ENCODE measurements at regions of chr14 and their contacts with region 1.

Region 1: DNA sequence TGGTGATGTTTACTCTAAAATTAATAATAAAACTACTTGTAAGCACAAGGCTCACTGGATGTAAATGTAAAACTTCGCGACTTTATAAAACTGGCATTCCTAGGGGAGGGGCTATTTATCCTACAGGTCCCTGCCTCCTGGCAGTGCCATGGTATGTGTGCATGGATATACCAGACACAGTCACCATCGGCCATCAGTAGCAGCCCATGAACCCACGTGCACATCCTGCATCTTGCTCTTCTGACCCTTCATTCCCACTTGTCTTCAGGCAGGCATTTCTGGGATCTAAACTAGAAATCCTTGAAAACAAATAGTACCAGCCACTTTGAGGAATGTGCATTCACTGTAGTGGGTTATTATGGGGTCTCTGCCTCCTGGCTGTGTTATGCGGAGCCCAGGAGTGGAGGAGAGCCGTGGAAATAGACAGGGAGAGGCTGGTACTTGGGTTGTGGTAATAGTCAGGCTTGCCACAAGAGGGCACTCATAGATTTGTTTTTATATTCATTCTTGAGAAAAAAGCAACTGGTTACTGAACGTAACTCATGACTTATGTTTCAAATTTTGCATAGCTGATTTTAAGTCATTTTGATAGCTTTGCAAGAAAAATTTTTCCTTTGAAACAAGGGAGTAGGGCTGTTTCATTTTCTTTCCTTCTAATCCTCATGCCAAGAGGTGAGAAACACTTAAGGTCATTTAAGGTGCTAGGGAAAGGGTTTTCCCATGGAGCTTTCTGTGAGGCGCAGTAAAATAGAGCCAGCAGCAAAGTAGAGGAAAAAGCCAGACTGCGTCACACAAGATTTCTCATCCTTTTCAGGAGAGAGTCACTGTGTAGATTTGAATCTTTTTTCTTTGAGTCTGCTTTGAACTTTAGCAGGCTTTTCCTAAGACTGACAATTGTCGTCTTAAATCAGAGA is 17.4 kb upstream of the GALNT16 start:
- DNase-seq: peak in 13 of 14 experiments; percentile 7 to 74 (median 37)
- ATAC-seq: peak; percentile 77
- H3K4me3 ChIP-seq: no peak overlapping the region
- H3K4me3 Mint-ChIP-seq: no peak overlapping the region
- H3K27ac ChIP-seq: no peak overlapping the region
- H3K27ac Mint-ChIP-seq: no peak overlapping the region
- H3K4me1 ChIP-seq: no peaks in the 10 kb centered on the region
- H3K4me1 Mint-ChIP-seq: peaks cover 6% of the 10 kb centered on the region
- H3K27me3 ChIP-seq: no peaks in the 10 kb centered on the region
- H3K27me3 Mint-ChIP-seq: no peaks in the 10 kb centered on the region
- CTCF ChIP-seq: peak; percentile 91

Region 2: DNA sequence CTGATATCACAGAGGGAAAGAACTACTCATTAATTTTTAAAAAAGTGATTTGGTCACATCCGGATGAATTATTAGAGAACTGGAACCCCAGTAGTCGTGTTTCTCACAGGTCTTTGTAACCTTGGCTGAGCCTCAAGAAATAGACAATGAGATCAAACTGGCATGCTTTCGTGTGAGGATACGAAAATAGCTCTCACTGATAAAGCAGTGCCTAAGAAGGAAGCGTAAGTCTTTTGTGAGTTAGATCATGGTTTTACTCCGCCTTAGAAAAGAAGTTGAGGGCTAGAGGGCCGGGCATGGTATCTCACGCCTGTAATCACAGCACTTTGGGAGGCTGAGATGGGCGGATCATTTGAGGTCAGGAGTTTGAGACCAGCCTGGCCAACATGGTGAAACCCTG is 16.4 kb before region 1 on chr14:
- CTCF ChIA-PET with region 1: no interaction called
- POLR2A ChIA-PET with region 1: no interaction called
- intact Hi-C with region 1: no loop called
- DNase-seq: no peak
- ATAC-seq: no peak
- H3K4me3 ChIP-seq: no peak overlapping the region
- H3K4me3 Mint-ChIP-seq: no peak overlapping the region
- H3K27ac ChIP-seq: no peak overlapping the region
- H3K27ac Mint-ChIP-seq: no peak overlapping the region
- H3K4me1 ChIP-seq: no peaks in the 10 kb centered on the region
- H3K4me1 Mint-ChIP-seq: no peaks in the 10 kb centered on the region
- H3K27me3 ChIP-seq: no peaks in the 10 kb centered on the region
- H3K27me3 Mint-ChIP-seq: no peaks in the 10 kb centered on the region
- CTCF ChIP-seq: no peak

Region 3: GRCh38 chr14:69460093-69460701 is 217.6 kb after region 1 on chr14:
- CTCF ChIA-PET with region 1: interaction called, 6 read pairs
- POLR2A ChIA-PET with region 1: no interaction called
- intact Hi-C with region 1: loop called in 1 of 2 experiments (anchors 1 kb)
- DNase-seq: peak in 13 of 14 experiments; percentile 4 to 77 (median 29)
- ATAC-seq: peak; percentile 81
- H3K4me3 ChIP-seq: no peak overlapping the region
- H3K4me3 Mint-ChIP-seq: no peak overlapping the region
- H3K27ac ChIP-seq: no peak overlapping the region
- H3K27ac Mint-ChIP-seq: no peak overlapping the region
- H3K4me1 ChIP-seq: no peaks in the 10 kb centered on the region
- H3K4me1 Mint-ChIP-seq: no peaks in the 10 kb centered on the region
- H3K27me3 ChIP-seq: no peaks in the 10 kb centered on the region
- H3K27me3 Mint-ChIP-seq: no peaks in the 10 kb centered on the region
- CTCF ChIP-seq: peak; percentile 80

Region 4: DNA sequence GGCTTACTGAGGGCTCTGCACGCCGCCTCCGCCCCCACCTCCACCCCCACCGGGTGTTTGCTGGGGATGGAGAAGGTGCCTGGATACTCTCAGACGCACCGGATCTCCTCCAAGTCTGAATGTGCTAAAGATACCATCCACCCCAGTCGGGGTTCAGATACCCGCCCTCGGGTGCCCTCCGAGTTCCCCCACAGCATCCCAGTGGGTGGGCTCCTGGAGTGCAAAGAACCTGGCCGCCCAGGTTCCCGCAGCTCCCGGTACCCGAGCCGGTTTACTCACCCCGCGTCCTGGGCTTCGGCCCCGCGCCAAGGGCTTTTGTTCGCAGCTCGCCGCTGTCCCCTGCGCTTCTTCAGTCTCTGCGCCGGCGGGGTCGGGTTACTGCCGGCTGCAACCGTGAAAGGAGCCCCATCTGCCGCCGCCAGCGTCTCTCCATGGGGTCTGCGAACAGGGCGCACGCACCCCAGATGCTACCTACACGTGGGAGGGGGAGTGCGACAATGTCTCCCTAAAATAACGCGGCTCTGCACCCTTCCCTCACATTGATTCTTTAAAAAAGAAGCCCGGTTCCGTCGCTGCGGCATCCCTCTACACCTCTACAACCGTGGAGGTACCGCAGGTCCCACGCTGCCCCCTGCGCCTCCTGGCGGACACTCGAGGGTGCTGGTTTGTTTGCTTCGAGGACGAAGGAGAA is 331.8 kb after region 1 on chr14 and contains the start of gene CCDC177:
- CTCF ChIA-PET with region 1: no interaction called
- POLR2A ChIA-PET with region 1: no interaction called
- intact Hi-C with region 1: loop called in 1 of 2 experiments (anchors 2 kb)
- DNase-seq: peak; percentile 56 to 83 (median 68)
- ATAC-seq: peak; percentile 87
- H3K4me3 ChIP-seq: peak within 1 kb of the TSS; percentile 55
- H3K4me3 Mint-ChIP-seq: peak within 1 kb of the TSS; percentile 83
- H3K27ac ChIP-seq: no peak within 1 kb of the TSS
- H3K27ac Mint-ChIP-seq: no peak within 1 kb of the TSS
- H3K4me1 ChIP-seq: peaks cover 29% of the 10 kb centered on the region
- H3K4me1 Mint-ChIP-seq: peaks cover 11% of the 10 kb centered on the region
- H3K27me3 ChIP-seq: peaks cover 36 to 49% of the 10 kb centered on the region in 2 experiments
- H3K27me3 Mint-ChIP-seq: peaks cover 61% of the 10 kb centered on the region
- CTCF ChIP-seq: peak; percentile 97
- total RNA-seq, gene CCDC177: not detected

Region 5: DNA sequence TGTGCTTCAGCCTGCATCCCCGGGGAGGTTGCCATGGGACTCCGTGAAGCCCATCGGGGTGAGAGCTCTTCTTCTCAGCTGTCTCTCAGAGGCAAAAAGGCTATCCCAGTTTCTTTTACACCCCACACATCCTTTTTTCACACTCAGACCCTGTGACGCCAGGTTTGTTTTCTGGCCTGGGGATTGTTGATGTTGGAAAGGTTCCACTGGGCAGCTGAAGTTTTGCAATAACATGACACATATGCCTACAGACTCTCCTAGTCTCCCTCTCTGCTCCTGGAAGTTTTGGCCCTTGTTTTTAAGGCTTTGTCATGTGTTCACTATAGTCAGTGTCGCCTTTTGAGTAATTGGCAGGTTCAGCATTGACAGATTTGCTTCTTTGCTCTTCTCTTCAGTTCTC is 755.3 kb after region 1 on chr14:
- CTCF ChIA-PET with region 1: no interaction called
- POLR2A ChIA-PET with region 1: no interaction called
- intact Hi-C with region 1: no loop called
- DNase-seq: no peak
- ATAC-seq: no peak
- H3K4me3 ChIP-seq: no peak overlapping the region
- H3K4me3 Mint-ChIP-seq: no peak overlapping the region
- H3K27ac ChIP-seq: no peak overlapping the region
- H3K27ac Mint-ChIP-seq: no peak overlapping the region
- H3K4me1 ChIP-seq: no peaks in the 10 kb centered on the region
- H3K4me1 Mint-ChIP-seq: no peaks in the 10 kb centered on the region
- H3K27me3 ChIP-seq: peaks cover 0 to 2% of the 10 kb centered on the region in 2 experiments
- H3K27me3 Mint-ChIP-seq: peaks cover 13% of the 10 kb centered on the region
- CTCF ChIP-seq: no peak

Measured in CD4-positive, alpha-beta T cell (primary cell).